ENCODE measurements at regions of chr10 and their contacts with region 1.

Region 1: DNA sequence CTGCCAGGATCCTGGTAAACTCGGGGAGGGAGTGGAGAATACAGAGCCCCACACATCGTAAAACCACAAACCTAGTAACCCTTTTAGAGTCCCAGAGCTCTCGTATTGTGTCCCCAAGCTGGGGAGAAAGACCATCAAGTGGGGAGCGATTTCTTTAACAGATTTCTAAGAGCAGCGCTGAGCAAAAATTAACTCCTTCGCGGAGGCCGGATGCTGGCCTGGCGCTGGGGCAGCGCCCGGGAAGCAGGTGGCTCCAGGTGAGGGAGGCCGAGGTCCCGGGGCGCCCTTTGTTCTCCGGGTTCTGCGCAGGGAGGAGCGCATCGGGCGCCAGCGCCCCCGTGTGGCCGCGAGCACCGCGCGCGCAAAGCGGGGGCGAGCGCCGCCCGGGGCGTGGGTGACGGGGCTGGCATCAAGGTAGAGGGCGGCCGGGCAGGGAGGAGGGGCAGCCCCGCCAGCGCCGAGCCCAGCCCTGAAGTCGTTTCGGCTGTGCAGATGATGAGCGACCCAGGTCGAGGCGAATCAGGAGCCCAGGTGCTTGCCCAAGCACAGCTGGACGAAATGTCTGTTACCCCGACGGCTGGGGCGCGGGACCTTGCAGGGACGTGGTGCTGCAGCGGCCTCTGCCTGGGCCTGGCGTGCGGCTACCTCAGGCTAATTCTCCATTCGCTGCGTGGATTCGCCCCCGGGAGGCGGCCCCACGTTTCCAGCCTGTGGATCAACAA is 10.4 kb upstream of the FGFR2 start:
- DNase-seq: peak; percentile 44
- ATAC-seq: peak; percentile 96

Region 2: DNA sequence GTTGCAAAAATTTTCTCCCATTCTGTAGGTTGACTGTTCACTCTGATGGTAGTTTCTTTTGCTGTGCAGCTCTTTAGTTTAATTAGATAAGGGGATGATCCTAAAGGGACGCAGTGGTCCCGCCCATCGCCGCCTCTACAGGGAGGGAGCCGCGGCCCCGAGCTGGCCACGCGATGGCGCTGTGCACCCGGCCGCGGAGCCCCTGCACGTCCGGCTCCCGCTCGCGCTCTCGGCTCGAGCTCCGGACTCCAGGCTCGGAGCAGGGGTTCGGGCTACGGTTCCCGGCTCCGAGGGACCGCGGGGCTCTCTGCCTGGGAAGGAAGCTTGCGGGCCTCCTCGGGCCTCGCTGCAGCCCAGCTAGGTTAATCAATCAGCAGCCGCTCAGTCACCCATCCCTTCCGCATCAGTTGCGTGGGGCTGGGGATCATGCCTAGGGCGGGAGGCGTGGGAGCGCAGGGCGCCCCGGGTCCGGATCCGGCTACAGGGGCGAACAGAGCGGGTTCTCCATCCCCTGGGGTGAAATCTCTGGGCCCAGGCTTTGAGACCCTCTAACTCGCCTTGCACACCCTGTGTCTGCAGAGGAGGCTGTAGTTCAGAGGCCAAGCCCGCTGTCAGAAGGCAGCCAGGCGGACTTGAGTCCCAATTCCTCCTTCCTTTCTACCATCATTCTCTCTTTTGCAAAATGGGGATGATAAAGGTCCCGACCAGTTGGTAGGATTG is 659.6 kb before region 1 on chr10:
- intact Hi-C with region 1: loop called (anchors 5 kb)
- DNase-seq: peak; percentile 83
- ATAC-seq: peak; percentile 98

Region 3: DNA sequence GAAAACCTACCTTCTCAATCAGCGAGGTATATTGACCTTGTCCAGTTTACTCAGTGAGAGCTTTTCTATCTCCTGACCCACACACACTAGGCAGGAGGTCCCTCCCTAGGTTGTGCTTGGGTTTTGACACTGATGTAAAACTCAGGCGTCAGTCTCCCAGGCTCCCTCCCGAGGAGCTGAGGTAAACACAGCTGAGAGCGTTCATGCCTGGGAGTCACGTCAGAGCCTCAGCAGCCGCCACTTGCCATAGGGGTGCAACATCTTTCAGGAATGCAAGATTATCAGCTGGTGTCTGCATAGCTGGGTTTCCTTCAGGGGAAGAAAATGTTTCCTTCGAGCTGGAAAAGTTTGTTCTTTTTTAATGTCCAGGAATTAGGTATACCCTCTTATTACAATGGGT is 81.0 kb before region 1 on chr10:
- intact Hi-C with region 1: no loop called
- DNase-seq: no peak
- ATAC-seq: no peak

Region 4: GRCh38 chr10:122590153-122590552 is 981.5 kb after region 1 on chr10:
- intact Hi-C with region 1: no loop called
- DNase-seq: no peak
- ATAC-seq: no peak